ENCODE measurements at regions of chr9 and their contacts with region 1.

Region 1: GRCh38 chr9:34437006-34437925 is 21.1 kb downstream of the FAM219A start:
- DNase-seq: peak; percentile 68
- ATAC-seq: peak; percentile 88
- H3K4me3 ChIP-seq: no peak overlapping the region
- H3K27ac ChIP-seq: no peak overlapping the region
- H3K4me1 ChIP-seq: no peaks in the 10 kb centered on the region
- H3K27me3 ChIP-seq: no peaks in the 10 kb centered on the region
- CTCF ChIP-seq: peak; percentile 86
- EP300 ChIP-seq: no peak
- POLR2A ChIP-seq: no peak
- RAD21 ChIP-seq: peak; percentile 67; the same call in 1 of the 2 replicates

Region 2: GRCh38 chr9:34376002-34376595 is 61.2 kb before region 1 on chr9:
- CTCF ChIA-PET with region 1: no interaction called
- POLR2A ChIA-PET with region 1: no interaction called
- in situ Hi-C with region 1: no loop called
- intact Hi-C with region 1: no loop called
- DNase-seq: peak; percentile 69
- ATAC-seq: peak; percentile 52
- H3K4me3 ChIP-seq: peak overlapping the region; percentile 73 to 90 (median 79)
- H3K27ac ChIP-seq: peak overlapping the region; percentile 85
- H3K4me1 ChIP-seq: peaks cover 54% of the 10 kb centered on the region
- H3K27me3 ChIP-seq: no peaks in the 10 kb centered on the region; a peak in 1 of 5 replicates
- CTCF ChIP-seq: peak; percentile 69
- EP300 ChIP-seq: no peak
- POLR2A ChIP-seq: no peak
- RAD21 ChIP-seq: peak; percentile 72; the same call in 1 of the 2 replicates

Region 3: GRCh38 chr9:34458013-34458958 is 21.0 kb after region 1 on chr9 and contains the starts of genes DNAI1 and FAM219A:
- CTCF ChIA-PET with region 1: no interaction called
- POLR2A ChIA-PET with region 1: no interaction called
- in situ Hi-C with region 1: no loop called
- intact Hi-C with region 1: no loop called
- DNase-seq: peak; percentile 94
- ATAC-seq: peak; percentile 97
- H3K4me3 ChIP-seq: peak within 1 kb of the TSS; percentile 71 to 91 (median 80)
- H3K27ac ChIP-seq: no peak within 1 kb of the TSS
- H3K4me1 ChIP-seq: peaks cover 22% of the 10 kb centered on the region
- H3K27me3 ChIP-seq: no peaks in the 10 kb centered on the region; a peak in 1 of 5 replicates
- CTCF ChIP-seq: no peak
- EP300 ChIP-seq: no peak
- POLR2A ChIP-seq: peak; percentile 69 to 81
- RAD21 ChIP-seq: no peak
- total RNA-seq, gene DNAI1: not detected in 2 replicates
- total RNA-seq, gene FAM219A: 3.7 and 3.9 TPM in 2 replicates

Region 4: DNA sequence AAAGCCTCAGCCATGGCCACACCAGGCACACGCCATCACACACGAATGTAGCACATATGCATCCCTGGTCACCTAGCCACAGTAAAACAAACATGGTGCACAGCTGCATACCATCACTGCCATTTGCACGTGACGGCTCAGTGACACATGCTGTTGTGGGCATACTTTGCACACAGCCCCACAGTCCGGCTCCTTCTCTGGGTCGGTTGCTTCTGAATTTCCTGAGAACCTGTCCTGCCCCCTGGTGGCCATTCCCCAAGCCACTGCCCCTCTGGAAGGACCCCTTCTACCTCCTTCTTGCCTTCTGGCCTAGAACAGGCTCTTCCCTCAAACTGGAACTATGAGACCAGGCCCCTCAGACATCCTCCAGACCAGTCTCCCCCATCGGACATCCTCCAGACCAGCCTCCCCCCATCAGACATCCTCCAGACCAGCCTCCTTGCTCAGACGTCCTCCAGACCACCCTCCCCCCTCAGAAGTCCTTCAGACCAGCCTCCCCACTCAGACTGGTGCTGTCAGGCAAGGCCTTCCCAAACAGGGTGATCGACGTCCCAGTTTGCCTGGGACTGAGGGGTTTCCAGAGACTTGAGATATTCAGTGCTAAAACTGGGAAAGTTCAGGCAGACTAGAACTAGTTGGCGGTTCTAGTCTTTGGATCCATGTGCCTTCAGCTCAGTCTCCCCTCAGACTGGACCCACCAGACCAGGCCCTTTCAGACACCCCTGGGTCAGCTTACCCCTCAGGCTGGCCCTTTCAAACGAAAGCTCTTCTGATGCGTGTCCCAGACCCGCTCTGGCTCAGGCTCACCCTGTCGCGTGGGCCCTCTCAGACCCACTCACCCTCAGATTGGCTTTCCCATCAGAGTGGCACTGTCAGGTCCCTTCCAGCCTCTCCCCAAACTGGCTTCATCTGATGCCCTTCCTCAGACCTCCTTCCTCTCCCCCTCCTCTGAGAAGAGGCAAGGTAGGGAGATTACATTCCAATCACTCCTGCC is 109.9 kb after region 1 on chr9:
- CTCF ChIA-PET with region 1: interaction called, 34 read pairs
- POLR2A ChIA-PET with region 1: no interaction called
- in situ Hi-C with region 1: no loop called
- intact Hi-C with region 1: loop called (anchors 1 kb)
- DNase-seq: peak; percentile 58
- ATAC-seq: peak; percentile 76
- H3K4me3 ChIP-seq: no peak overlapping the region
- H3K27ac ChIP-seq: no peak overlapping the region
- H3K4me1 ChIP-seq: peaks cover 18% of the 10 kb centered on the region
- H3K27me3 ChIP-seq: peaks cover 0 to 17% of the 10 kb centered on the region in 2 experiments; a peak in 2 of 5 replicates
- CTCF ChIP-seq: peak; percentile 78
- EP300 ChIP-seq: no peak
- POLR2A ChIP-seq: no peak
- RAD21 ChIP-seq: peak; percentile 73

Measured in HepG2 (cell line).